Caco-2 (cell line): ENCODE measurements at regions of chr2 and their contacts with region 1.

Region 1: DNA sequence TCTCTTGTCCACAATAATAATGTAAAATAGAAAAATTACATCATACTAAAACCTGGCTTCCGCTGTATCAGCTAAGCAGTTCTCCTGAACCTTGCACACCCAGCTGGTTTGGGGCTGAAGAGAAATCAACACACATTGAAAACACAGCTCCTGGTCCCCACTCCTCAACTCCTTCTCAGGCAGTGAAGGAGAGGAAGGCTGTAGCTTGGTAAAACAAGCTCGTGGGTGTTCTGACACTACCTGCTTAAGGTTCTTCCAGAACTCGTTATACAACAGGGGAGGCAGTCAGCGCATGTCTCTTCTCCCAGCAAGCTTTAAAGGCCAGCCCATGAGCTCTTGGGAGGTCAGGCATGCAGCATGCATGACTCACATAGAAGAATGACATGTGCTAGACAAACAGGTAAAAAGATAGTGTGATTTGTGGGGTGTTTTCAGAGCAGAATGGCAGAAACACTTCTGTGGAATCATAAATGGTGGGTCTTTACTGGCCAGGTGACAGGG is 69.1 kb downstream of the UXS1 start:
- DNase-seq: peak; percentile 57 to 60
- H3K4me3 ChIP-seq: no peak overlapping the region
- H3K4me3 Mint-ChIP-seq: no peak overlapping the region
- H3K27ac Mint-ChIP-seq: peak overlapping the region; percentile 69
- H3K4me1 ChIP-seq: peaks cover 58% of the 10 kb centered on the region
- H3K4me1 Mint-ChIP-seq: peaks cover 50% of the 10 kb centered on the region
- H3K27me3 ChIP-seq: no peaks in the 10 kb centered on the region
- H3K27me3 Mint-ChIP-seq: no peaks in the 10 kb centered on the region
- CTCF ChIP-seq: no peak

Region 2: GRCh38 chr2:106053116-106053515 is 71.8 kb before region 1 on chr2:
- CTCF ChIA-PET with region 1: no interaction called
- POLR2A ChIA-PET with region 1: no interaction called
- intact Hi-C with region 1: no loop called
- DNase-seq: no peak
- H3K4me3 ChIP-seq: no peak overlapping the region
- H3K4me3 Mint-ChIP-seq: no peak overlapping the region
- H3K27ac Mint-ChIP-seq: no peak overlapping the region
- H3K4me1 ChIP-seq: 0 out of 2 replicates have a peak, but pooled peaks cover 5% of the 10 kb centered on the region
- H3K4me1 Mint-ChIP-seq: peaks cover 6% of the 10 kb centered on the region
- H3K27me3 ChIP-seq: no peaks in the 10 kb centered on the region
- H3K27me3 Mint-ChIP-seq: no peaks in the 10 kb centered on the region
- CTCF ChIP-seq: no peak

Region 3: DNA sequence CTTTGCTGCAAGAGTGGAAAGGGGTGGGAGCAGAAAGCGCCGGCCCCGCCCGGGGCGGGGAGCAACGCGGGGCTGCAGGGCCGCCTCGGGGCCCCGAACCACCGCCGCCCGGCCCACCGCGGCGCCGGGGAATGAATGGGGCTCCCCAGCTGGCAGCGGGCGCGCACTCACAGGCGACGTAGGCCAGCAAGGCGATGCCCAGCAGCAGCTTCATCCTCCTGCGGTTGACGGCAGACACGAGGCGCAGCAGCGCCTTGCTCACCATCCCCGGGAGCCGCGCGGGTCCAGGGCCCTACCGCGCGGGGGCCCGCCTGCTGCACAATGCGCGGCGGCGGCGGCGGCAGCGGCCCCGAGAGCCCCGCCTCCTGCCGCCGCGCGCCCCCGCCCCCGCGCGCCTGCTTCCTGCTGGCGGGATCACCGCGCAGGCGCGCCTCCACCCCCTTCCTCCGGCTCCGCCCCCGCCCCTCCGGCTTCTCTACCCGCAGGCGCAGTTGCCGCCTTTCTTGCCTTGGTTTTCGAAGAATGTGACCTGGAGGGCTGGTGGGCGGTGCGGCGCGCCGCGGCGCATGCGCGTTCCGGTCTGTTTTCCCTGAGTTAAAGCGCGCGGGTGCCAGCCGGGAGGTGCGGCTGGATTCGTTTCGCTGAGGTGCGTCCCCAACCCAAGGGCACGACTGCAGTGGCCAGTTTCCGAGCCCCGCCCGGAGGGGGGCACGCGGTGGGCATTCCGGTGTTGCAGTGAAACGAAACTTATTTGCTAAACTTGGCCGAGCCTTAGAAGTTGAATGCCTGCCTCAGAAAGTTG is 69.2 kb after region 1 on chr2 and contains the start of gene UXS1:
- CTCF ChIA-PET with region 1: no interaction called
- POLR2A ChIA-PET with region 1: no interaction called
- intact Hi-C with region 1: loop called (anchors 5 kb)
- DNase-seq: peak; percentile 98
- H3K4me3 ChIP-seq: peak within 1 kb of the TSS; percentile 91
- H3K4me3 Mint-ChIP-seq: peak within 1 kb of the TSS; percentile 81
- H3K27ac Mint-ChIP-seq: peak within 1 kb of the TSS; percentile 95
- H3K4me1 ChIP-seq: peaks cover 23% of the 10 kb centered on the region
- H3K4me1 Mint-ChIP-seq: peaks cover 42% of the 10 kb centered on the region
- H3K27me3 ChIP-seq: no peaks in the 10 kb centered on the region
- H3K27me3 Mint-ChIP-seq: no peaks in the 10 kb centered on the region
- CTCF ChIP-seq: no peak
- total RNA-seq, gene UXS1: 71.5 and 72.7 TPM in 2 replicates

Region 4: DNA sequence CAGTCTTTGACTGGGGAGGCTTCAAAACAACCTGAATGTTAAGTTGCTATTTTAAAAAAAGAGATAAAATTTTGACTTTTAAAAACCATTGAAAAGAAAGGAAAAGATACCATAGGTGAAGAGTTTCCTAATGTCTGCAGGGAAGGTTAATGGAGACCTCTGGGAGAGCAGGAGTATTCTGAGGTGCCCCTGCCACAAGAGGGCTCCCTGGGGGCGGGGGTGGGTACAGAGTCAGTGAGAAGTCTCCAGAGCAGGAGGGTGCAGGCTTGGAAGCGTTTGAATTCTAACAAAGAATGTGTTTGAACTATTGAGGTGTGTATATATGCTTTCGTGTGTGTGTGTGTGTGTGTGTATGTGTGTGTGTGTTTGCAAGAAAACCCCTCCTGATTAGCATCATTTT is 807.7 kb after region 1 on chr2:
- CTCF ChIA-PET with region 1: no interaction called
- POLR2A ChIA-PET with region 1: no interaction called
- intact Hi-C with region 1: no loop called
- DNase-seq: no peak
- H3K4me3 ChIP-seq: no peak overlapping the region
- H3K4me3 Mint-ChIP-seq: no peak overlapping the region
- H3K27ac Mint-ChIP-seq: no peak overlapping the region
- H3K4me1 ChIP-seq: no peaks in the 10 kb centered on the region
- H3K4me1 Mint-ChIP-seq: no peaks in the 10 kb centered on the region
- H3K27me3 ChIP-seq: no peaks in the 10 kb centered on the region
- H3K27me3 Mint-ChIP-seq: peaks cover 2% of the 10 kb centered on the region
- CTCF ChIP-seq: no peak